ENCODE measurements at regions of chr1 and their contacts with region 1.

Region 1: DNA sequence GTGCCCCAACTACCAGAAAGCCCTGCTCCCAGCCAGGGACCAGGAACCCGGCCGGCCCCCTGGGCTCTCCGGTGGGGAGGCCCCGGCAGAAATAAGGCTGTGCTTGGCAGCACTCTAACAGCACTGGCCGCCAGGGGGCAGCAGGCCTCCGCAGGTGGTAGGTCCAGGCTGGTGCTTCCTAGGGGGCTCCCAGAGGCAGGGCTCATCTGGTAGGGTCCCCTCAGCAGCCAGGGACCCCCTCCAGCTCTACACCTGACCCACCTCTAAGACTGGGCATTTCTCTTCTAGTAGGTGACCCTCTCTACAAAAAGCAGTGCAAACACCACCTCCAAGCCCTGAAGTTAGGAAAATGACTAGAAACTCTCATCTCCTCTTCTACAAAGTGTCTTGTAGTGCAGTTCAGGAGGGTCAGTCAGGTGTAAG is 85.6 kb downstream of the STUM start:
- DNase-seq: peak; percentile 56 to 86 (median 78)
- H3K4me3 ChIP-seq: no peak overlapping the region
- H3K27ac ChIP-seq: no peak overlapping the region
- H3K4me1 ChIP-seq: no peaks in the 10 kb centered on the region
- H3K27me3 ChIP-seq: no peaks in the 10 kb centered on the region
- CTCF ChIP-seq: peak; percentile 89 to 95 (median 94)
- POLR2A ChIP-seq: no peak

Region 2: GRCh38 chr1:226702957-226703831 is 69.0 kb after region 1 on chr1:
- intact Hi-C with region 1: no loop called
- DNase-seq: peak; percentile 64 to 80 (median 73)
- H3K4me3 ChIP-seq: peak overlapping the region in 3 of 4 donors; percentile 27 to 86 (median 69)
- H3K27ac ChIP-seq: peak overlapping the region in 4 of 5 donors; percentile 91 to 98 (median 94)
- H3K4me1 ChIP-seq: peaks cover 7 to 23% of the 10 kb centered on the region in 2 donors
- H3K27me3 ChIP-seq: no peaks in the 10 kb centered on the region
- CTCF ChIP-seq: no peak
- POLR2A ChIP-seq: peak; percentile 68 to 79

Region 3: GRCh38 chr1:226827968-226828513 is 193.9 kb after region 1 on chr1:
- intact Hi-C with region 1: loop called (anchors 2 to 5 kb)
- DNase-seq: peak; percentile 93 to 98 (median 96)
- H3K4me3 ChIP-seq: peak overlapping the region in 1 of 4 donors; percentile 16
- H3K27ac ChIP-seq: peak overlapping the region in 2 of 5 donors; percentile 51 to 62
- H3K4me1 ChIP-seq: peaks cover 0 to 12% of the 10 kb centered on the region in 2 donors
- H3K27me3 ChIP-seq: no peaks in the 10 kb centered on the region
- CTCF ChIP-seq: peak; percentile 84 to 96 (median 92)
- POLR2A ChIP-seq: no peak

Region 4: DNA sequence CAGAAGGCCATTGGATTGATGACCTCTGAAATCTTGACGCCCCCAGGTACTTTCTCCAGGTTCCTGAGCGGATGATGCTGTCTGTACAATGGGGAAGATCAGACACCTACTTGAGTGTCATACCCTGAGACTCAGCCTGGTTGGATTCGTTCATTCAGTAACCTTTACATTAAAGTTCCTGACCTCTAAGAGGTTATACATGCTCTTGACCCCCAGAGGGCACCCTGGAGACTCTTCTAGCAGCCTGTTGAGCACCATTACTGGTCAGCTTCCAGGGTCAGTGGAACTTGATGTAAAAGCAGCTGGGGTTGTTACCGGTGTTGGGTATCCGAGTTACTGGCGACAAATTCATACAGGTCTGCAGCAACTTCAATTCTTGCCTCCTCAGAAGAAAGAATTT is 814.9 kb after region 1 on chr1:
- intact Hi-C with region 1: loop called in 1 of 2 experiments (anchors 10 kb)
- DNase-seq: peak in 2 of 7 donors; percentile 37 to 43
- H3K4me3 ChIP-seq: no peak overlapping the region
- H3K27ac ChIP-seq: no peak overlapping the region
- H3K4me1 ChIP-seq: no peaks in the 10 kb centered on the region
- H3K27me3 ChIP-seq: no peaks in the 10 kb centered on the region
- CTCF ChIP-seq: peak in 3 of 6 experiments; percentile 12 to 27 (median 17)
- POLR2A ChIP-seq: no peak